Activated CD8-positive, alpha-beta T cell treated with anti-CD3 and anti-CD28 coated beads for 36 hours (primary cell): ENCODE measurements at regions of chr17 and their contacts with region 1.

Region 1: DNA sequence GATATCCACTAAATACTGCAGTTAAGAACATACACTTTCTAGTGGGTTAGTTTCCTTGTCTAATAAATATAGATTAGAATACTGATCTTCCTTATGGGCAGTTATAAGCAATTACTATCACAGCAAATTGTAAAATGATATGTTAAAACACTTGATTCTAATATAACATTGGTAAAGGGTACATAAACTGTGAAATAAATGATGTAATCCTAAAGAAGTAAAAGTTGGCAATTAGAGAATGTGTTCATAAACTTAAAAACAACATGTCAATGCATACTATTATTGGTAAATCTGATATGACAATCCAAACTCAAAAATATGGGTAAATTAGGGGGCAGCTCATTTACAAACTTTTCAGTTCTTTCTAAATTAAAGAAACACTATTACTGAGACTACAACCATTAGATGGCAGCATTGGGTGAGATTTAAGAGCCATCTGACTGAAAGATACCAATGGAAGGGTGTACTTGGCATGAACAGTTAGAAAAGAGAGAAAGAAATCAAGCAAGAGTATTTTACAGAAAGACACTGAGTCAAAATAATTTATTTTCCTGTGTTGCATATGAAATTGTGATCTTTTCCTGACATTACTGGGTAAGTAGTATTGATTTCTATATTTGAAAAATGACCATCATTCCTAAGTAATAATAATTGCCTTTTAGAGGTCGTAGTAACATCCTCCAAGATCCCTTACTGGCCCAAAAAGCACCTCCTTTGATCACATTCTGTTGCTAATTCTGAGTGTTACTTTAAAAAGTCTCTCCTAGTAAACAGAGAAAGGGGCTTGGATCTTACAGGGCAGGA is 119.6 kb downstream of the SPAG9 start:
- DNase-seq: no peak
- ATAC-seq: peak; percentile 78
- H3K4me3 Mint-ChIP-seq: no peak overlapping the region
- H3K27ac Mint-ChIP-seq: peak overlapping the region; percentile 28
- H3K4me1 Mint-ChIP-seq: no peaks in the 10 kb centered on the region
- H3K27me3 Mint-ChIP-seq: no peaks in the 10 kb centered on the region
- CTCF ChIP-seq: peak; percentile 69

Region 2: GRCh38 chr17:51017270-51017669 is 16.2 kb after region 1 on chr17:
- CTCF ChIA-PET with region 1: interaction called, 10 read pairs
- POLR2A ChIA-PET with region 1: interaction called, 3 read pairs
- intact Hi-C with region 1: no loop called
- DNase-seq: no peak
- ATAC-seq: no peak
- H3K4me3 Mint-ChIP-seq: no peak overlapping the region
- H3K27ac Mint-ChIP-seq: no peak overlapping the region
- H3K4me1 Mint-ChIP-seq: no peaks in the 10 kb centered on the region
- H3K27me3 Mint-ChIP-seq: no peaks in the 10 kb centered on the region
- CTCF ChIP-seq: no peak

Region 3: GRCh38 chr17:51056813-51057510 is 55.9 kb after region 1 on chr17:
- CTCF ChIA-PET with region 1: interaction called, 43 read pairs
- POLR2A ChIA-PET with region 1: no interaction called
- intact Hi-C with region 1: no loop called
- DNase-seq: peak; percentile 34
- ATAC-seq: no peak
- H3K4me3 Mint-ChIP-seq: no peak overlapping the region
- H3K27ac Mint-ChIP-seq: no peak overlapping the region
- H3K4me1 Mint-ChIP-seq: peaks cover 7% of the 10 kb centered on the region
- H3K27me3 Mint-ChIP-seq: no peaks in the 10 kb centered on the region
- CTCF ChIP-seq: peak; percentile 54

Region 4: GRCh38 chr17:51120739-51121617 is 119.9 kb after region 1 on chr17 and contains the start of gene SPAG9:
- CTCF ChIA-PET with region 1: interaction called, 13 read pairs
- POLR2A ChIA-PET with region 1: interaction called, 4 read pairs
- intact Hi-C with region 1: no loop called
- DNase-seq: peak; percentile 92
- ATAC-seq: peak; percentile 79
- H3K4me3 Mint-ChIP-seq: peak within 1 kb of the TSS; percentile 91
- H3K27ac Mint-ChIP-seq: peak within 1 kb of the TSS; percentile 98
- H3K4me1 Mint-ChIP-seq: peaks cover 46% of the 10 kb centered on the region
- H3K27me3 Mint-ChIP-seq: no peaks in the 10 kb centered on the region
- CTCF ChIP-seq: no peak
- total RNA-seq, gene SPAG9: 54.3 to 59.8 TPM